ENCODE measurements at regions of chr19 and their contacts with region 1.

Region 1: GRCh38 chr19:50537762-50538230 is 24.1 kb upstream of the ASPDH start:
- DNase-seq: peak; percentile 84
- ATAC-seq: peak; percentile 72 to 86

Region 2: GRCh38 chr19:50639121-50640112 is 101.6 kb after region 1 on chr19 and contains the start of gene SYT3:
- intact Hi-C with region 1: loop called in 1 of 2 experiments (anchors 5 kb)
- DNase-seq: peak; percentile 73
- ATAC-seq: peak; percentile 88 to 94
- total RNA-seq, gene SYT3: 0.24 to 0.52 TPM

Region 3: DNA sequence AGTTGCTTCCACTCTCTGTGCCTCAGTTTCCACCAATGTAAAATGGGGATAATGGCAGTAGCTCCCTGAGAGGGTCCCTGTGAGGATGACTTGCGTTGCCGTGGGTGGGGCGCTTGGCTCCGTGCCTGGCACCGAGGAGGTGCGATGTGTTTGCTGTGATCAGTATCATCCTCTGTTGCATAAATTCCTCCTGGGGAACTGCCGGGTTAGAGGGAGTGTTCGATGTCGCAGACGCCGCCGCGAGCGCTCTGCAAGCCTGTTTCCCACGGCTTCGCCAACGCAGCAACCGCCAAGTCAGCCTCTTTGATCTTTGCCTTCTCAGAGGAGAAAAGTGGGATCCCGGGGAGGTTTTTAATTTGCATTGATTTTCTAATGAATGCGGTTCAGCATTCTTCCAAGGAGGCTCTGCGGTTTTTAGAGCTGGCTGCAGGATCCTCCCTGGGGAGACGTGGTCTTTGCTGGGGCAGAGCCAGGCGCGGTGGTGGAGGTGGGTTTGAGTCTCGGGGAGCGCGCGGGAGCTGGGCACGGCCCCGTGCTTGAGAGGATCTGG is 240.0 kb after region 1 on chr19:
- intact Hi-C with region 1: loop called (anchors 2 to 10 kb)
- DNase-seq: no peak
- ATAC-seq: no peak

Region 4: GRCh38 chr19:50922317-50922853 is 384.6 kb after region 1 on chr19:
- intact Hi-C with region 1: loop called in 1 of 2 experiments (anchors 10 kb)
- DNase-seq: peak; percentile 71
- ATAC-seq: peak; percentile 79 to 96